ENCODE measurements at regions of chr5 and their contacts with region 1.

Region 1: DNA sequence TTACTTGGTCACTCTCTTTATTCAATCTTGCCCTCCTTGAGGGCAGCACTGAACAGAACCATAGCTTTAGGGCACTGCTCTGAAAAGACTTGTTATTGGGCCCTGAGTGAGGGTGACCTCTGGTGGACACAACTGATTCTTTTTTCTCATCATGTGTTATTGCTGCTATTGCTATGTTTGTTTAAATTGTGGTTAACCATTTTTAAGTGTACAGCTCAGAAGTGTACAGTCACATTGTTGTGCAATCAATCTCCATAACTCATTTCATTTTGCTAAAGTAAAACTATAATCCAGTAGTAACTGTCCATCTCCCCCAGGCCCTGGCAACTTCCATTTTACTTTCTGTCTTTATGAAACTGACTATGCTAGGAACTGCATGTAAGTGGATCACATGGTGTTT is 351.1 kb upstream of the RIOK2 start:
- DNase-seq: peak; percentile 20
- H3K4me3 ChIP-seq: no peak overlapping the region
- H3K27ac ChIP-seq: no peak overlapping the region
- H3K4me1 ChIP-seq: no peaks in the 10 kb centered on the region
- H3K27me3 ChIP-seq: no peaks in the 10 kb centered on the region
- CTCF ChIP-seq: peak; percentile 15 to 52 (median 40)
- POLR2A ChIP-seq: no peak

Region 2: DNA sequence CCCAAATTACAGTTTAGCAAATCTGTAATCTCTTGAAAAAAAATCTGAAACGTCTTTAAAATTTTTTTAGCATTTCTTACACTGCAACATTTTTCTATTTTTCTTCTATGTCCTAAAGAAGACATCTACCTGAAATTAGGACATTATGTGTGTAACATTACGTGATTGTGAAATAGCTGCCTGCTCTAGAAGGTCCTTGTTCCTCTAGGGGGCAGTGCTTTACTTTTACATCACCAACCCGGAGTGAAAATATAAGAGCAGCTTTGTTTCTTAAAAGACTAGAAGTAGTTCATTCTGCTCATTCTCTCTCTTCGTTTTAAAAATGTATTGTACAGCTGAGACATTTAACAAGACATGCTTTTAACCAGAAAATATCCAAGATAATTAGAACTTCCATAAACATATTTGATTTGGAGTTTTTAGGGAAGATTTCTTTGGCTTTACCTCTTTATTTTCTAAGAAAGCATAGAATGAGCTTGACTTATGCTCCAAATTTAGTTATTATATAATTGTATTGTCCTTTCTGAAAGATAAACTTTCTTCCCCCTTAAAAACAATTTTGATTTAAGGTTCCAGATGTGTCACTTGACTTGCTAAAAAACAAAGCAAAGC is 303.0 kb before region 1 on chr5:
- intact Hi-C with region 1: loop called (anchors 2 kb)
- DNase-seq: peak; percentile 34
- H3K4me3 ChIP-seq: no peak overlapping the region
- H3K27ac ChIP-seq: no peak overlapping the region
- H3K4me1 ChIP-seq: no peaks in the 10 kb centered on the region
- H3K27me3 ChIP-seq: no peaks in the 10 kb centered on the region
- CTCF ChIP-seq: peak; percentile 26 to 73 (median 68)
- POLR2A ChIP-seq: no peak

Region 3: GRCh38 chr5:97425511-97425910 is 108.7 kb before region 1 on chr5:
- intact Hi-C with region 1: loop called (anchors 10 kb)
- DNase-seq: no peak
- H3K4me3 ChIP-seq: no peak overlapping the region
- H3K27ac ChIP-seq: no peak overlapping the region
- H3K4me1 ChIP-seq: no peaks in the 10 kb centered on the region
- H3K27me3 ChIP-seq: peaks cover 2% of the 10 kb centered on the region
- CTCF ChIP-seq: peak in 2 of 4 experiments; percentile 11 to 27
- POLR2A ChIP-seq: no peak

Measured in prostate gland (tissue), 2 donors.